Tibial artery (tissue), 4 donors: ENCODE measurements at regions of chr2 and their contacts with region 1.

Region 1: DNA sequence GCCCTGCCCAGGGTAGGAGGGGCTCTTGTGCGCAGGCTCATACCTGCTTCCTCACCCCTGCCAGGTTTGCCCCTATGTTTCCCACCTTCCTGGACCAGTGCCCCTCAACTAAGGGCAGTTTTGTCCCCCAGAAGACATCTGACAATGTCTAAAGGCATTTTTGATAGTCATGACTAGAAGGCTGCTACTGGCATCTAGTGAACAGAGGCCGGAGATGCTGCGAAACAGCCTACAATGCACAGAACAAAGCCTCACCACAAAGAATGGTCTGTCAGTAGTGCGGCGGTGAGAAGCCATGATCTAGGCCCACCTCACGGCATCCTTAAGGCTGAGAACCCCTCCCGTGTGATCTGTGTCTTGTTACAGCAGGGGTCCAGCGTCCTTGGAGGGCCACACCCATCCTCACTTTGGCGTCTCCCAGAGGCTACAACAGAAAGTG is 96.0 kb downstream of the TMEM17 start:
- DNase-seq: no peak
- H3K4me3 ChIP-seq: no peak overlapping the region
- H3K27ac ChIP-seq: peak overlapping the region; percentile 78 to 83
- H3K4me1 ChIP-seq: peaks cover 0 to 31% (median 17%) of the 10 kb centered on the region in 4 donors
- H3K27me3 ChIP-seq: no peaks in the 10 kb centered on the region
- CTCF ChIP-seq: no peak

Region 2: DNA sequence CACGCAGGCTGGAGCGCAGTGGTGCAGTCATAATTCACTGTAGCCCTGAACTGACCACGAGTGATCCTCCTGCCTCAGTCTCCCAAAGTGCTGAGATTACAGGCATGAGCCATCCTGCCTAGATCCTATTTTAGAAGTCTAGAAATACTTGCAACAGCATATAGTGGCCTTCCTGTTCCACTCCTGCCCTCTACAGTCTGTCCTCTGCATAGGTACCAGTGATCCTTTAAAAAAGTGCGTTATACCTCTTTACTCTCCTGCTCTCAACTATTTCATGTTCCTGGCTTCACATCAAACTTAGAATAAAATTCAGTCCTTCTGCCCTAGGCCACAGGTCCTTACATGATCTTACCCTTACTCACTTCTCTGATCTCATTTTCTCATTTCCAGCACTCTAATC is 498.5 kb before region 1 on chr2:
- intact Hi-C with region 1: loop called (anchors 2 kb)
- DNase-seq: no peak
- H3K4me3 ChIP-seq: no peak overlapping the region
- H3K27ac ChIP-seq: no peak overlapping the region
- H3K4me1 ChIP-seq: peaks cover 0 to 21% (median 9%) of the 10 kb centered on the region in 4 donors
- H3K27me3 ChIP-seq: no peaks in the 10 kb centered on the region
- CTCF ChIP-seq: no peak

Region 3: DNA sequence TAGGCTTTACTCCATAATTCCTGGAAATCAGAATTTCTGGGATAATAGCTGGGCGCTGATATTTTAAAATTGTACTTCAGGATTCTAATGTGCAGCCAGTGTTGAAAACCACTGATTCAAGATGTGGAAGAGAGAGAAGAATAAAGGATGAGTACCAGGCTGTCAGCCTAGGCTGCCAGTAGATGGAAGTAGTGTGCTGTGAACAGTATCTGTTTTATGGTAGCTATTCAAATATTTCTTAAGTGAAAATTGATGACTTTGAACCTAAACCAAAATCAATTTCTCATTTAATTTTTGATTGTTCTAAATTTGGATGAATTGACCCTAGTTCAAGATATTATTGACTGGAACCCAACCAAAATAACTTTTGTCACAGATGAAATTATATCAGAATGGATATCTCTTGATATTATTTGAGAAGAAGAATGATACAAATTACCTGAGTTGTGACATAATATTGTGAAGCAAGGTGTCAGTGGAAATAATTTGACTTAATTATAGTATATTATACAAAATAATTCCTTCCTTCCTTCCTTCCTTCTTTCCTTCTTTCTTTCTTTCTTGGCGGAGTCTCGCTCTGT is 416.5 kb before region 1 on chr2:
- intact Hi-C with region 1: loop called (anchors 5 kb)
- DNase-seq: no peak
- H3K4me3 ChIP-seq: no peak overlapping the region
- H3K27ac ChIP-seq: no peak overlapping the region
- H3K4me1 ChIP-seq: peaks cover 0 to 8% (median 0%) of the 10 kb centered on the region in 4 donors
- H3K27me3 ChIP-seq: no peaks in the 10 kb centered on the region
- CTCF ChIP-seq: peak; percentile 64 to 69